ENCODE measurements at regions of chr15 and their contacts with region 1.

Region 1: DNA sequence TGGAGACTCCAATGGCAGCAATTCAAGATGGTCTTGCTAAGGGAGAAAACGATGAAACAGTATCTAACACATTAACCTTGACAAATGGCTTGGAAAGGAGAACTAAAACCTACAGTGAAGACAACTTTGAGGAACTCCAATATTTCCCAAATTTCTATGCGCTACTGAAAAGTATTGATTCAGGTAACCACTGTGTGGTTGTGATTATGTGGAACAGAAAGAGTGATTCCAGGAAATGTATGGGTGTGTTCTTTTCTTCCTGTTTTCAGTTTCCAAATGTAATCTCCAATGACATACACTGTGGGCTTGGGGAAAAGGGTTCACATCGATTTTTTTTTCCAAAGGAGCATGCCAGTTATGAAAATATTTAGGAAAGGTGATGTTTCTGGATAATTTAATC is 10.9 kb downstream of the SCG3 start:
- DNase-seq: no peak
- H3K4me3 ChIP-seq: no peak overlapping the region
- CTCF ChIP-seq: no peak
- POLR2A ChIP-seq: no peak

Region 2: GRCh38 chr15:51731549-51732267 is 39.6 kb after region 1 on chr15:
- intact Hi-C with region 1: loop called (anchors 1 kb)
- DNase-seq: peak in 1 of 2 donors; percentile 25
- H3K4me3 ChIP-seq: no peak overlapping the region
- CTCF ChIP-seq: no peak
- POLR2A ChIP-seq: no peak

Measured in lower leg skin (tissue), 4 donors.